Endothelial cell of umbilical vein (primary cell): ENCODE measurements at regions of chr16 and their contacts with region 1.

Region 1: GRCh38 chr16:58449768-58450167 is 50.2 kb upstream of the NDRG4 start:
- DNase-seq: no peak
- H3K4me3 ChIP-seq: no peak overlapping the region
- H3K27ac ChIP-seq: no peak overlapping the region
- H3K4me1 ChIP-seq: peaks cover 17% of the 10 kb centered on the region
- H3K27me3 ChIP-seq: no peaks in the 10 kb centered on the region
- CTCF ChIP-seq: no peak
- POLR2A ChIP-seq: no peak

Region 2: DNA sequence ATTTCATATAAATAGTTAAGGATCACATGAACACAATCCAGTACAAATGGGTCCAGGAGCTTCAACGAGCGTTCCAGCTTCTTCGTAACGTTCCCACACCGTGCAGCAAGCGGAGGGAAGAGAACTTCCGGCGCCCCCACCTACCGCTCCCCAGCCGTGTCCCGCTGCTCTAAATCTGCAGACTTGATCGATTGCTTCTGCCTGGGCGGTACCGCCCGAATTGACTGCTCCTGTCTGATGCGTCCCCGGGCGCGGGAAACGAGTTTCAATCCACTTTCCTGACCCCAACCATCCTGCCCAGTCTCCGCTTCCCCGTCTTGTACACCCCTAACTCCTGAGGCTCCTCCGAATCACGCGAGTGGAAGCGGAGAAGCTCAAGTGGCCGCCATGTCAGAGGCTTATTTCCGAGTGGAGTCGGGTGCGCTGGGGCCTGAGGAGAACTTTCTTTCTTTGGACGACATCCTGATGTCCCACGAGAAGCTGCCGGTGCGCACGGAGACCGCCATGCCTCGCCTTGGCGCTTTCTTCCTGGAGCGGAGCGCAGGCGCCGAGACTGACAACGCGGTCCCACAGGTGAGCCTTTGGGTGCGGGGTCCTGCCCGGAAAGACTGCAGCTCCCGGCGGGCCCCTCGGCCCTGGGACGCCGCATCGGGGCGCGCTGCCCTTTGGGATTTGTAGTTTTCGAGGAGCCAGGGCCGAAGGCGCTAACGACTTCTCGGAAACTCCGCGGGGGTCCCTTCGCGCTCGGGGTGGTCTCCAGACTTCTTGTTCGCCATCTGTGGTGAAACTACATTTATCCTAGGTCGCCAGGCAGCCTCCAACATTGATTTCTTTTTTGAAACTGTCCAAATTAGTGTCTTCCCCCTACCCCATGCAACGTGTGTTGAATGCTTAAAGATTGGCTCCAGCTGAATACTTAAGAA is 57.3 kb before region 1 on chr16 and contains the start of gene GINS3:
- CTCF ChIA-PET with region 1: no interaction called
- POLR2A ChIA-PET with region 1: no interaction called
- dilution Hi-C with region 1: no loop called
- intact Hi-C with region 1: loop called (anchors 1 kb)
- DNase-seq: peak; percentile 82
- H3K4me3 ChIP-seq: peak within 1 kb of the TSS; percentile 89 to 96 (median 95)
- H3K27ac ChIP-seq: peak within 1 kb of the TSS; percentile 79
- H3K4me1 ChIP-seq: peaks cover 9% of the 10 kb centered on the region
- H3K27me3 ChIP-seq: no peaks in the 10 kb centered on the region
- CTCF ChIP-seq: no peak
- POLR2A ChIP-seq: no peak
- total RNA-seq, gene GINS3: 24.1 and 29.0 TPM in 2 replicates